K562 (cell line): ENCODE measurements at regions of chr1 and their contacts with region 1.

Region 1: DNA sequence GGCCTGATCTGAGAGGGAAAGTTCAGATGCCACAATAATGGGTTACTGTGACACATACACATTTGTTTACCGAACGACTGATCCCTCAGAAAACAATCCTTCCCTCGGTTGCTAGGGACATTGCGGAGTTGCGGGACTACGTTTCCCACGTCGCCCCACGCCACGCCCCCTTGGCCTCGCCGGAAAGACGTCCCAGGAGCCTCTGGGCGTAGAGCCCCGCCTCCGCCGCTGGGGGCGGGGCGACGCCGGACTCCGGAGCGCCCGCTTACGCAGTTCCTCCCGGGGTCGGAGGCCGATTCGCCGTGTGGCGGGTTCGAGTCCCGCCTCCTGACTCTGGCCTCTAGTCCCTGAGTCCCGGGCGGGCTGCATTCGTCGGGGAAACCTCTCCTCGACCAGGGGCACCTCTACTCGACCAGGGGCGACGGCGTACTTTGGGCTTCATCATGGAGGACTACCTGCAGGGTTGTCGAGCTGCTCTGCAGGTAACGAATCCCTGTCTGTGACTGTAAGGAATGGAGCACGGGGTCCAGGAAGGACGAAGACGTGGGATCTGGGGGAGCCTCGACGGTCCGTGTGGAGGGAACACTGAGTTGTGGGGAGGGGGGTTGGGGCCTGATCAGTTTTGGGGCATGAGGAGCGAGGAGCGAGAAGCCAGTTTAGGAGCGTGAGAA is at the start of gene PRUNE1:
- DNase-seq: peak; percentile 97 to 98 (median 98)
- ATAC-seq: peak; percentile 82
- H3K4me3 ChIP-seq: peak within 1 kb of the TSS; percentile 87
- H3K27ac ChIP-seq: peak within 1 kb of the TSS; percentile 92
- H3K4me1 ChIP-seq: peaks cover 37 to 45% of the 10 kb centered on the region in 2 experiments
- H3K27me3 ChIP-seq: no peaks in the 10 kb centered on the region
- CTCF ChIP-seq: no peak
- EP300 ChIP-seq: no peak; the same call in 1 of the 2 replicates
- POLR2A ChIP-seq: peak; percentile 77
- RAD21 ChIP-seq: no peak
- polyA plus RNA-seq, gene PRUNE1: 16.7 to 27.7 TPM

Region 2: DNA sequence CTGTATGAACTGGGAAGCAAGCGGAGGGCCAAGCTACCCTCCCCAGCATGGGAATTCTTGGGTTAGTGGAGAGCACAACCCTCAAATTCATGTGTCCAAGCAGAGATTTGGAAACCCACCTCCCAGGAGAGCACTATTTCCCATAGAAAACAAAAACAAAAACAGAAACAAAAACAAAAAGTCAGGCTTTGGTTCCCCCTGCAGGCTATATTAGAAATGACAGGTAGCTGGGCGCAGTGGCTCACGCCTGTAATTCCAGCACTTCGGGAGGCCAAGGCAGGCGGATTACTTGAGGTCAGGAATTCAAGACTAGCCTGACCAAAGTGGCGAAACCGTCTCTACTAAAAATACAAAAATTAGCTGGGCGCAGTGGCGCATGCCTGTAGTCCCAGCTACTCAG is 12.4 kb before region 1 on chr1:
- CTCF ChIA-PET with region 1: interaction called, 5 read pairs
- POLR2A ChIA-PET with region 1: interaction called, 22 read pairs
- in situ Hi-C with region 1: no loop called
- intact Hi-C with region 1: no loop called
- DNase-seq: peak in 3 of 4 experiments; percentile 38 to 55 (median 39)
- ATAC-seq: peak; percentile 34; the same call in 1 of the 3 replicates
- H3K4me3 ChIP-seq: no peak overlapping the region
- H3K27ac ChIP-seq: no peak overlapping the region
- H3K4me1 ChIP-seq: peaks cover 27 to 33% of the 10 kb centered on the region in 2 experiments
- H3K27me3 ChIP-seq: no peaks in the 10 kb centered on the region
- CTCF ChIP-seq: peak; percentile 56 to 76 (median 73); a peak in 5 of 6 replicates
- EP300 ChIP-seq: no peak
- POLR2A ChIP-seq: no peak
- RAD21 ChIP-seq: peak; percentile 64 to 70

Region 3: GRCh38 chr1:151059078-151059907 is 51.0 kb after region 1 on chr1 and contains the start of gene CDC42SE1:
- CTCF ChIA-PET with region 1: no interaction called
- POLR2A ChIA-PET with region 1: interaction called, 4 read pairs
- in situ Hi-C with region 1: no loop called
- intact Hi-C with region 1: loop called (anchors 5 kb)
- DNase-seq: peak; percentile 84 to 94 (median 88)
- ATAC-seq: peak; percentile 80
- H3K4me3 ChIP-seq: peak within 1 kb of the TSS; percentile 95
- H3K27ac ChIP-seq: peak within 1 kb of the TSS; percentile 91
- H3K4me1 ChIP-seq: peaks cover 38 to 44% of the 10 kb centered on the region in 2 experiments
- H3K27me3 ChIP-seq: no peaks in the 10 kb centered on the region
- CTCF ChIP-seq: peak; percentile 84 to 96 (median 84)
- EP300 ChIP-seq: peak; percentile 37; the same call in 1 of the 2 replicates
- POLR2A ChIP-seq: peak; percentile 91
- RAD21 ChIP-seq: peak; percentile 45 to 59
- polyA plus RNA-seq, gene CDC42SE1: 78.1 to 114 TPM

Region 4: GRCh38 chr1:151070474-151071276 is 62.4 kb after region 1 on chr1 and contains the start of gene GABPB2:
- CTCF ChIA-PET with region 1: no interaction called
- POLR2A ChIA-PET with region 1: interaction called, 4 read pairs
- in situ Hi-C with region 1: no loop called
- intact Hi-C with region 1: loop called (anchors 5 kb)
- DNase-seq: peak; percentile 92 to 94 (median 93)
- ATAC-seq: peak; percentile 89
- H3K4me3 ChIP-seq: peak within 1 kb of the TSS; percentile 82
- H3K27ac ChIP-seq: peak within 1 kb of the TSS; percentile 98
- H3K4me1 ChIP-seq: peaks cover 20 to 29% of the 10 kb centered on the region in 2 experiments
- H3K27me3 ChIP-seq: no peaks in the 10 kb centered on the region
- CTCF ChIP-seq: peak; percentile 76 to 88 (median 86)
- EP300 ChIP-seq: no peak
- POLR2A ChIP-seq: peak; percentile 91
- RAD21 ChIP-seq: peak; percentile 48
- polyA plus RNA-seq, gene GABPB2: 2.2 to 3.0 TPM

Region 5: GRCh38 chr1:151346769-151347522 is 338.6 kb after region 1 on chr1 and contains the start of gene RFX5:
- CTCF ChIA-PET with region 1: no interaction called
- POLR2A ChIA-PET with region 1: no interaction called
- in situ Hi-C with region 1: no loop called
- intact Hi-C with region 1: no loop called
- DNase-seq: peak; percentile 96 to 97 (median 97)
- ATAC-seq: peak; percentile 99
- H3K4me3 ChIP-seq: peak within 1 kb of the TSS; percentile 54
- H3K27ac ChIP-seq: peak within 1 kb of the TSS; percentile 95
- H3K4me1 ChIP-seq: peaks cover 0 to 13% of the 10 kb centered on the region in 2 experiments; a peak in 3 of 5 replicates
- H3K27me3 ChIP-seq: no peaks in the 10 kb centered on the region
- CTCF ChIP-seq: no peak
- EP300 ChIP-seq: peak; percentile 5
- POLR2A ChIP-seq: peak; percentile 82
- RAD21 ChIP-seq: no peak
- polyA plus RNA-seq, gene RFX5: 3.8 to 4.9 TPM